ENCODE measurements at regions of chr17 and their contacts with region 1.

Region 1: GRCh38 chr17:65407017-65407416 is 154.4 kb downstream of the AXIN2 start:
- DNase-seq: no peak

Region 2: DNA sequence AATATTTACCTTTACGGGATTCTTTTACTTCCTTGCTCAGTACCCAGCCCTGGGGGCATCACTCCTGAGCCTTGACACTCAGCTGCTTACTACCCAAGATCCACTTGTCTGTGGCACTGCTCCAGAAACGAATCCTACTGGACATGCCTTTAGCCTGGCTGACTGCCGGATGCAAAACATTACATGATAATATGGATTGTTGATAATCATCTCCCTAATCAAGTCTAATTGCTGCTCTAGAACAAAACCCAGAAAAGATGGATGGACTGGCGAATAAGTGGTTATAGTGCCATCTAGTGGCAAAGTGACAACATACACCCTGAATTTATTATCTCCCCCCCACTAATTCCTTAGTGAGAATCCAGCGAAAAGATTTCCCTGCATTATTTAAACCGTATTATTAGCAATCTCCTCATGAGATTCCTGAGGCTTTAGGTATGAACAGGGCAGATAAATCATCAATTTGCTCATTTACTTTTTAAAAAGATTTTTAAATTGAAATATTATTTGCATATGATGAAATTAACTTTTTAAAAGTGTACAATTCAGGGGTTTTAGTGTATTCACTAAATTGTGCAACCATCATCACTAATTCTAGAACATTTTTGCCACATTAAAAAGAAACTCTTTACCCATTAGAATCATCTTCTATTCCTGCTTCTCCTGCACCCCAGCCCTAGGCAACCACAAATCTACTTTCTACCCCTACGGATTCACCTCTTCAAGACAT is 208.2 kb before region 1 on chr17:
- CTCF ChIA-PET with region 1: interaction called, 10 read pairs
- POLR2A ChIA-PET with region 1: no interaction called
- DNase-seq: peak; percentile 79

Measured in HEK293T (cell line).